ENCODE measurements at regions of chr15 and their contacts with region 1.

Region 1: GRCh38 chr15:50876989-50877360 is 31.5 kb upstream of the AP4E1 start:
- DNase-seq: peak; percentile 56 to 76 (median 69)
- H3K4me3 ChIP-seq: peak overlapping the region in 1 of 2 donors; percentile 29
- H3K4me3 Mint-ChIP-seq: peak overlapping the region; percentile 49 to 87 (median 74)
- H3K27ac ChIP-seq: no peak overlapping the region
- H3K27ac Mint-ChIP-seq: peak overlapping the region in 5 of 7 donors; percentile 38 to 64 (median 58)
- H3K4me1 ChIP-seq: peaks cover 20% of the 10 kb centered on the region
- H3K4me1 Mint-ChIP-seq: peaks cover 12 to 41% (median 20%) of the 10 kb centered on the region in 4 donors
- H3K27me3 ChIP-seq: no peaks in the 10 kb centered on the region
- H3K27me3 Mint-ChIP-seq: peaks cover 0 to 6% of the 10 kb centered on the region in 2 donors

Region 2: DNA sequence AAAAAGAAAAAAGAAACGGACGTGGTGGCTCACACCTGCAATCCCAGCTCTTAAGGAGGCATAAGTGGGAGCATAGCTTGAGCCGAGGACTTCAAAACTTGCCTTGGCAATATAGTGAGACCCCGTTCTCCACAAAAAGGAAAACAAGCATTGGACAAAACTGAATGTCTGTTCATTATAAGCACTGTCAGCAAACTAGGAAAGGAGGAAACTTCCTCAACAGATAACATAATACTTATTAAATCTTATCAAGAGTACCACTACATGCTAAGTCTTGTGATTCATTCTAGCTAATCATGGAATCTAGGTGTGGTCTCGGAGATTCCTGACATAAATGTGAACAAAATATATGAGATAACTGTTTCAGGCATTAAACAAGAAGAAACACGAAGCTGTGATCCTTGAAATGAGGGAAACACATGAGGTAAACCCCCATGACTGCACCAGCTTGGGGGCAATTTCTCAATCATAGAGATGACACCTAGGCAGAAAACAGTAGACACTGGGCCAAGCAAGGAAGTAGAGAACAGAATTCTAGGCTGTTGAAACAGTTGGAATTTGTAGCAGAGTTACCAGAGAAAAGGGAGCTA is 223.7 kb before region 1 on chr15:
- CTCF ChIA-PET with region 1: interaction called, 13 read pairs
- POLR2A ChIA-PET with region 1: no interaction called
- intact Hi-C with region 1: no loop called
- DNase-seq: no peak
- H3K4me3 ChIP-seq: no peak overlapping the region
- H3K4me3 Mint-ChIP-seq: no peak overlapping the region
- H3K27ac ChIP-seq: no peak overlapping the region
- H3K27ac Mint-ChIP-seq: peak overlapping the region in 4 of 7 donors; percentile 2 to 75 (median 6)
- H3K4me1 ChIP-seq: no peaks in the 10 kb centered on the region
- H3K4me1 Mint-ChIP-seq: peaks cover 3 to 11% (median 8%) of the 10 kb centered on the region in 4 donors
- H3K27me3 ChIP-seq: no peaks in the 10 kb centered on the region
- H3K27me3 Mint-ChIP-seq: no peaks in the 10 kb centered on the region

Region 3: GRCh38 chr15:51203797-51204196 is 326.8 kb after region 1 on chr15:
- CTCF ChIA-PET with region 1: no interaction called
- POLR2A ChIA-PET with region 1: no interaction called
- intact Hi-C with region 1: no loop called
- DNase-seq: no peak
- H3K4me3 ChIP-seq: no peak overlapping the region
- H3K4me3 Mint-ChIP-seq: no peak overlapping the region
- H3K27ac ChIP-seq: no peak overlapping the region
- H3K27ac Mint-ChIP-seq: no peak overlapping the region
- H3K4me1 ChIP-seq: no peaks in the 10 kb centered on the region
- H3K4me1 Mint-ChIP-seq: no peaks in the 10 kb centered on the region
- H3K27me3 ChIP-seq: no peaks in the 10 kb centered on the region
- H3K27me3 Mint-ChIP-seq: peaks cover 0 to 6% of the 10 kb centered on the region in 2 donors